ENCODE measurements at regions of chr4 and their contacts with region 1.

Region 1: DNA sequence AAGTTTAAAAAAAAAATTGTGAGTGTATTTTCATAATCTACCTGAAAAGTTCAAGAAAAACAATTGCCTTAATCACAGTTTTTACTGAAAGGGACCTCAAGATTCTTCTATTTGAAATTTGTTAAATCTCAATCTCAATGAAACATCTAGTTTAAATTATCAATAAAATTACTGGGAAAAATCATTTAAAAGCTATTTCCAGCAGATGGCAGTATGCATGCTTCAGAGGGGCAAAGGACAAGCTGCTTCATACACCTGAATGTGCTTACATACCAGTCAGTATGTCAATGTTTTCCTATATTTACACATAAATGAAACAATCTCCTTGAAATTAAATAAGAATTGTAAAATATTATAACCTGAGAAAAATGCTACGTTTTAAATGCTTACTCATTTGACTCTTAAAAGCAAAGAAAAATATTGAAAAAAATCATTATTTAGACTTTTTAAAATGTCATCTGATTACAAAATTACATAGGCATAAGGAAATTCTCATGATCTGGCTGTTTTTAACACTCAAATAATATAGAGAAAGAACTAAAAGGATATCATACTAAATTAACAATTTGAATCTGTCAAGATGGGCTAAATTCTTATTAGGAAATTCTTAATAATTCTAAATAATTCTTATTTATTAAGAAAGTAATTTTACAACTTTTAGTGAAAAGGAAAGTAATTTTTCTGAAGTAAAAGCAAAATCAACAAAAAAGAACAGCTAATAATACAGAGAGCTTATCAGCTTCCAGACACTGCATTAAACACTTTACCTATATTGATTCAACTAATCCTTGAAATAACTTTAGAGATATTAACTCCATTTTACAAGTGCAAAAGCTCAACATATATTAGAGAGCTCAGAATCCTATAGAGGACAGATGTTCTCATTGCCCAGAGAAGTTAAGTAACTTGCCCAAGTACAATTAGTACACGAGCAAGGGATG is 242.1 kb downstream of the ADAMTS3 start:
- DNase-seq: no peak
- H3K4me3 Mint-ChIP-seq: no peak overlapping the region
- H3K27ac Mint-ChIP-seq: no peak overlapping the region
- H3K4me1 Mint-ChIP-seq: no peaks in the 10 kb centered on the region
- H3K27me3 Mint-ChIP-seq: no peaks in the 10 kb centered on the region

Region 2: GRCh38 chr4:72468904-72469502 is 142.0 kb after region 1 on chr4:
- CTCF ChIA-PET with region 1: interaction called, 16 read pairs
- DNase-seq: no peak
- H3K4me3 Mint-ChIP-seq: no peak overlapping the region
- H3K27ac Mint-ChIP-seq: no peak overlapping the region
- H3K4me1 Mint-ChIP-seq: no peaks in the 10 kb centered on the region
- H3K27me3 Mint-ChIP-seq: no peaks in the 10 kb centered on the region